Right ventricle myocardium superior (tissue), 1 donor: ENCODE measurements at regions of chr1 and their contacts with region 1.

Region 1: DNA sequence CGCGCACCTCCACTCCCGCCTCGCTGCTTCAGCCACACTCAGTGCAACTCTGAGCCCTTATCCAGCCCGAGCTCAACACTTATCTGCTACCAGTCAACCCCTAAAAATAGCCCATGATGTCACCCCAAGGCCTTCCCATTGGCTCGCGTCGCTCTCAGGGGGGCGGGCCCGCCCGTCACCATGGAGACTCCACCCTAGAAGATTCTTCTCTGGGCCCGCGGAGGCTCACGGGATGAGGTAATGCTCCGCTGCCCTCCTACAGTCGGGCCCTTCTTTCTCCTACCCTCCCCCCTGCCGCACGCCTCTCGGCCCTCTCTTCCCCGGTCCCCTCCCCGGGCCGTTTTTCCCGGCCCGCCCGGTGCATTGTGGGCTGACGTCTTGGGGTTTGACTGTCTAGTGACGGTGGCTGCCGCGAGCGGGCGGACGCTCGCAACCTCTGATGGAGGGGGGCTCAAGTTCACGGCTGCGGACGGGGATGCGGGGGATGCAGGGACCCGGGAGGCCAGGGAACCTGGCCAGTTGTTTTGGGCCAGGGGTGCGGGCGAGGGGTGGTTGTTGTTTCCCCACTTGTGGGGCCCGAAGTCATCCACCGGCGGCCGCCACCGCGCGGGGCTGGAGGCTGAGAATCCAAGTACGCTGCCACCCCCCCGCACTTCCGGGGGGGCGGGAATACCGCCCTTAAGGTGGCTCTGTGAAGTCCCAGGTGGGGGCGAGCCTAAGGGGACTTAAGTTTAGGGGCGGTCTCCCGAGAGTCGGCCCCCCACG is at the start of gene JUN:
- DNase-seq: peak; percentile 100
- ATAC-seq: peak; percentile 84
- total RNA-seq, gene JUN: 54.8 TPM

Region 2: DNA sequence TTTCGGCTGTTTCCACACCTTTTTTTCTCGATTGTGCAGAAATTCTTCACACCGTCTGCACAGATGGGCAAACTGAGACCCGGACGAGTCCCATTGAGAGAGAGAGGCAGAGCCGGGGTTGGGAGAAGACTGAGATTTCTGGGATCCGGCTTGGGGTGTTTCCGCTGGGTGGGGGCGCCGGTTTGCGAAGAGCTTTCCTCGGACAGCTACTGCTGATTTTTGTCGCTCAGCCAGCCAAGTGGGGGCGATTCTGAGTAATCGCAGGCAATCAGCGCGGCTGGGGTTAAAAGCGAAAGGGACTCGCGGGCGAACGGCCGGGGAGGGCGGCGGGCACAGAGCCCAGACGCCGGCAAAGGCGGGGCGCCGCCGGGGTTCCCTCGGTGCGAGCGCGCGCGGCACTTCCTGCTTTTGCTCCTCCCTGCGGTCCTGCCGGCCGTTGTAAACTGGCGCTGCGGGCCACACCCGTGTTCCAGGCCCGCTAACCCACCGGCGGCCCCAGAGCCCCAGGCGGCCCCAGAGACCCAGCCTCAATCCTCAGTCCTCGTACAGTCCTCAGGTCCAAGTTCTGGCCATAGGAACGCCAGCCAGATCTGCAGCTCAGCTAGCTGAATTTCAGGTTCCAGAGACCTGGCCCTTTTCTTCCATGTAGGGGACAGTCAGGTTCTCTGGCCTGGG is 32.0 kb after region 1 on chr1:
- intact Hi-C with region 1: loop called (anchors 2 kb)
- DNase-seq: peak; percentile 95
- ATAC-seq: peak; percentile 95

Region 3: GRCh38 chr1:58982259-58982998 is 198.3 kb after region 1 on chr1:
- intact Hi-C with region 1: loop called (anchors 10 kb)
- DNase-seq: peak; percentile 66
- ATAC-seq: peak; percentile 88

Region 4: GRCh38 chr1:59150577-59151391 is 366.6 kb after region 1 on chr1:
- intact Hi-C with region 1: loop called (anchors 5 kb)
- DNase-seq: peak; percentile 86
- ATAC-seq: peak; percentile 93

Region 5: GRCh38 chr1:59699227-59699847 is 915.2 kb after region 1 on chr1:
- intact Hi-C with region 1: loop called (anchors 5 kb)
- DNase-seq: no peak
- ATAC-seq: peak; percentile 35